GM12878 (cell line): ENCODE measurements at regions of chr16 and their contacts with region 1.

Region 1: GRCh38 chr16:18932243-18932981 is 6.2 kb upstream of the SMG1 start:
- DNase-seq: no peak
- ATAC-seq: no peak
- H3K4me3 ChIP-seq: no peak overlapping the region
- H3K27ac ChIP-seq: no peak overlapping the region
- H3K4me1 ChIP-seq: peaks cover 6% of the 10 kb centered on the region
- H3K27me3 ChIP-seq: no peaks in the 10 kb centered on the region
- CTCF ChIP-seq: no peak
- EP300 ChIP-seq: no peak
- POLR2A ChIP-seq: no peak
- RAD21 ChIP-seq: no peak

Region 2: GRCh38 chr16:18833707-18834500 is 98.5 kb before region 1 on chr16:
- CTCF ChIA-PET with region 1: no interaction called
- POLR2A ChIA-PET with region 1: no interaction called
- RAD21 ChIA-PET with region 1: no interaction called
- SMC1A ChIA-PET with region 1: no interaction called
- in situ Hi-C with region 1: no loop called
- intact Hi-C with region 1: no loop called
- DNase-seq: no peak
- ATAC-seq: no peak
- H3K4me3 ChIP-seq: no peak overlapping the region
- H3K27ac ChIP-seq: no peak overlapping the region
- H3K4me1 ChIP-seq: no peaks in the 10 kb centered on the region
- H3K27me3 ChIP-seq: no peaks in the 10 kb centered on the region
- CTCF ChIP-seq: no peak
- EP300 ChIP-seq: no peak
- POLR2A ChIP-seq: no peak
- RAD21 ChIP-seq: no peak

Region 3: GRCh38 chr16:18945233-18945632 is 12.8 kb after region 1 on chr16:
- CTCF ChIA-PET with region 1: interaction called, 16 read pairs
- POLR2A ChIA-PET with region 1: interaction called, 4 read pairs
- RAD21 ChIA-PET with region 1: interaction called, 20 read pairs
- SMC1A ChIA-PET with region 1: interaction called, 8 read pairs
- in situ Hi-C with region 1: no loop called
- intact Hi-C with region 1: no loop called
- DNase-seq: no peak
- ATAC-seq: no peak
- H3K4me3 ChIP-seq: no peak overlapping the region
- H3K27ac ChIP-seq: no peak overlapping the region
- H3K4me1 ChIP-seq: peaks cover 8% of the 10 kb centered on the region
- H3K27me3 ChIP-seq: no peaks in the 10 kb centered on the region
- CTCF ChIP-seq: no peak
- EP300 ChIP-seq: no peak
- POLR2A ChIP-seq: no peak
- RAD21 ChIP-seq: no peak

Region 4: GRCh38 chr16:18969050-18969854 is 36.8 kb after region 1 on chr16:
- CTCF ChIA-PET with region 1: interaction called, 13 read pairs
- POLR2A ChIA-PET with region 1: interaction called, 4 read pairs
- RAD21 ChIA-PET with region 1: no interaction called
- SMC1A ChIA-PET with region 1: interaction called, 4 read pairs
- in situ Hi-C with region 1: no loop called
- intact Hi-C with region 1: no loop called
- DNase-seq: peak; percentile 16
- ATAC-seq: peak; percentile 94
- H3K4me3 ChIP-seq: peak overlapping the region; percentile 68
- H3K27ac ChIP-seq: no peak overlapping the region
- H3K4me1 ChIP-seq: no peaks in the 10 kb centered on the region
- H3K27me3 ChIP-seq: no peaks in the 10 kb centered on the region
- CTCF ChIP-seq: peak; percentile 87 to 95 (median 90)
- EP300 ChIP-seq: 0 out of 4 replicates have a peak, but pooled peaks of 1 of the 2 experiments have one; percentile 29
- POLR2A ChIP-seq: no peak
- RAD21 ChIP-seq: peak; percentile 90